ENCODE measurements at regions of chr5 and their contacts with region 1.

Region 1: DNA sequence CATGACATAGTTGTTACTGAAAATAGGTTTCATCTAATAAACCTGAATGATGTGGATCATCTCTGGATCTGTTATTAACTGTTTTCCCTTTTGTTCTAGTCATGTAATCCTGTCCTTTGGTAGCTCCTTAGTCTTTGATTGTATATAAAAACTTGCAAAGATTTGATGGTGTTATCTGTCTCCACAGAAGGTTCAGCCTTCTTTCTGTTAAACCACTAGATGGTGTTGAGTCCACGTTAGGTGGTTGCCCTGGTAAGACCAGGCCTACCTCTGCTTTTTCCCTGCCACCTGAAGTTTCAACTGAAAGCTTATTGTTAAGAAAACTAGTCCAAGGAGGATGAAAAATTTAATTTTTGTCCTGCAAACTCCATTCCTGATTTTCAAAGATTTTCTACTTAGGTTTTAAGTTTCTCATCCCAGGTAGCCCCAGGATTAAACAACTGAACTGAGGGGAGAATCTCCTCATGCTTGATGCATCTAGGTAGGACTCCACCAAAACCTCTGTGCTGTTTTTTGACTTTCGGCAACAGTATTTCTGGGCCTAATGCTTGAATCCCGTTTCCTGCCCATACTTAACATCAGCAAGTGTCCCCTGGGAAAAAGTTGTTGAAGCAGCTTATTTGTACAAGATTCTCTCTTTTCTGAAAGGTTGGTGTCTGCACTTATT is 68.5 kb downstream of the RICTOR start:
- DNase-seq: no peak
- ATAC-seq: peak; percentile 73 to 91 (median 84)
- H3K4me3 ChIP-seq: no peak overlapping the region
- H3K27ac ChIP-seq: peak overlapping the region in 6 of 12 donors; percentile 3 to 54 (median 26)
- H3K4me1 ChIP-seq: peaks cover 0 to 20% (median 7%) of the 10 kb centered on the region in 12 donors
- H3K27me3 ChIP-seq: no peaks in the 10 kb centered on the region
- CTCF ChIP-seq: peak; percentile 23 to 63 (median 52)
- POLR2A ChIP-seq: no peak

Region 2: GRCh38 chr5:39080597-39081204 is 75.0 kb after region 1 on chr5:
- intact Hi-C with region 1: loop called in 6 of 10 experiments (anchors 1 to 5 kb)
- DNase-seq: peak in 3 of 5 donors; percentile 49 to 58 (median 55)
- ATAC-seq: peak; percentile 61 to 87 (median 82)
- H3K4me3 ChIP-seq: no peak overlapping the region
- H3K27ac ChIP-seq: no peak overlapping the region
- H3K4me1 ChIP-seq: peaks cover 0 to 25% (median 3%) of the 10 kb centered on the region in 12 donors
- H3K27me3 ChIP-seq: no peaks in the 10 kb centered on the region
- CTCF ChIP-seq: peak; percentile 73 to 94 (median 82)
- POLR2A ChIP-seq: no peak

Measured in heart left ventricle (tissue), 16 donors.